Naive thymus-derived CD4-positive, alpha-beta T cell (primary cell): ENCODE measurements at regions of chr17 and their contacts with region 1.

Region 1: GRCh38 chr17:50865984-50866774 is at the start of gene TOB1:
- DNase-seq: peak; percentile 92 to 98 (median 95)
- ATAC-seq: peak; percentile 86
- H3K4me3 ChIP-seq: peak within 1 kb of the TSS; percentile 89
- H3K4me3 Mint-ChIP-seq: peak within 1 kb of the TSS; percentile 96 to 100 (median 100)
- H3K27ac ChIP-seq: peak within 1 kb of the TSS; percentile 98
- H3K27ac Mint-ChIP-seq: peak within 1 kb of the TSS; percentile 98 to 100 (median 100)
- H3K4me1 ChIP-seq: peaks cover 41 to 50% of the 10 kb centered on the region in 2 donors
- H3K4me1 Mint-ChIP-seq: peaks cover 31 to 65% (median 57%) of the 10 kb centered on the region in 7 donors
- H3K27me3 ChIP-seq: no peaks in the 10 kb centered on the region
- H3K27me3 Mint-ChIP-seq: peaks cover 0 to 2% (median 0%) of the 10 kb centered on the region in 5 donors
- total RNA-seq, gene TOB1: 51.5 to 261 (median 131) TPM

Region 2: GRCh38 chr17:49361902-49362722 is 1504.1 kb before region 1 on chr17 and contains the start of gene ZNF652:
- CTCF ChIA-PET with region 1: no interaction called
- POLR2A ChIA-PET with region 1: no interaction called
- intact Hi-C with region 1: loop called in 1 of 2 experiments (anchors 5 kb)
- DNase-seq: peak; percentile 86 to 98 (median 97)
- ATAC-seq: peak; percentile 81
- H3K4me3 ChIP-seq: peak within 1 kb of the TSS; percentile 67
- H3K4me3 Mint-ChIP-seq: peak within 1 kb of the TSS; percentile 88 to 99 (median 96)
- H3K27ac ChIP-seq: peak within 1 kb of the TSS; percentile 71
- H3K27ac Mint-ChIP-seq: peak within 1 kb of the TSS; percentile 92 to 97 (median 97)
- H3K4me1 ChIP-seq: peaks cover 26 to 33% of the 10 kb centered on the region in 2 donors
- H3K4me1 Mint-ChIP-seq: peaks cover 48 to 58% (median 53%) of the 10 kb centered on the region in 7 donors
- H3K27me3 ChIP-seq: no peaks in the 10 kb centered on the region
- H3K27me3 Mint-ChIP-seq: no peaks in the 10 kb centered on the region
- total RNA-seq, gene ZNF652: 33.8 to 64.4 (median 49.9) TPM

Region 3: GRCh38 chr17:50707289-50708049 is 158.7 kb before region 1 on chr17 and contains the start of gene ANKRD40:
- CTCF ChIA-PET with region 1: no interaction called
- POLR2A ChIA-PET with region 1: interaction called, 8 read pairs
- intact Hi-C with region 1: loop called (anchors 5 kb)
- DNase-seq: peak; percentile 87 to 95 (median 91)
- ATAC-seq: peak; percentile 94
- H3K4me3 ChIP-seq: peak within 1 kb of the TSS; percentile 79
- H3K4me3 Mint-ChIP-seq: peak within 1 kb of the TSS; percentile 88 to 97 (median 93)
- H3K27ac ChIP-seq: peak within 1 kb of the TSS; percentile 88
- H3K27ac Mint-ChIP-seq: peak within 1 kb of the TSS; percentile 93 to 99 (median 97)
- H3K4me1 ChIP-seq: peaks cover 13 to 20% of the 10 kb centered on the region in 2 donors
- H3K4me1 Mint-ChIP-seq: peaks cover 23 to 68% (median 47%) of the 10 kb centered on the region in 7 donors
- H3K27me3 ChIP-seq: no peaks in the 10 kb centered on the region
- H3K27me3 Mint-ChIP-seq: peaks cover 0 to 2% (median 0%) of the 10 kb centered on the region in 5 donors
- total RNA-seq, gene ANKRD40: 27.4 to 37.2 (median 33.4) TPM

Region 4: GRCh38 chr17:50904521-50905459 is 38.6 kb after region 1 on chr17:
- CTCF ChIA-PET with region 1: interaction called, 10 read pairs
- POLR2A ChIA-PET with region 1: interaction called, 828 read pairs
- intact Hi-C with region 1: no loop called
- DNase-seq: no peak
- ATAC-seq: no peak
- H3K4me3 ChIP-seq: no peak overlapping the region
- H3K4me3 Mint-ChIP-seq: no peak overlapping the region
- H3K27ac ChIP-seq: no peak overlapping the region
- H3K27ac Mint-ChIP-seq: no peak overlapping the region
- H3K4me1 ChIP-seq: peaks cover 31 to 47% of the 10 kb centered on the region in 2 donors
- H3K4me1 Mint-ChIP-seq: peaks cover 40 to 68% (median 64%) of the 10 kb centered on the region in 7 donors
- H3K27me3 ChIP-seq: no peaks in the 10 kb centered on the region
- H3K27me3 Mint-ChIP-seq: peaks cover 0 to 2% (median 0%) of the 10 kb centered on the region in 5 donors

Region 5: DNA sequence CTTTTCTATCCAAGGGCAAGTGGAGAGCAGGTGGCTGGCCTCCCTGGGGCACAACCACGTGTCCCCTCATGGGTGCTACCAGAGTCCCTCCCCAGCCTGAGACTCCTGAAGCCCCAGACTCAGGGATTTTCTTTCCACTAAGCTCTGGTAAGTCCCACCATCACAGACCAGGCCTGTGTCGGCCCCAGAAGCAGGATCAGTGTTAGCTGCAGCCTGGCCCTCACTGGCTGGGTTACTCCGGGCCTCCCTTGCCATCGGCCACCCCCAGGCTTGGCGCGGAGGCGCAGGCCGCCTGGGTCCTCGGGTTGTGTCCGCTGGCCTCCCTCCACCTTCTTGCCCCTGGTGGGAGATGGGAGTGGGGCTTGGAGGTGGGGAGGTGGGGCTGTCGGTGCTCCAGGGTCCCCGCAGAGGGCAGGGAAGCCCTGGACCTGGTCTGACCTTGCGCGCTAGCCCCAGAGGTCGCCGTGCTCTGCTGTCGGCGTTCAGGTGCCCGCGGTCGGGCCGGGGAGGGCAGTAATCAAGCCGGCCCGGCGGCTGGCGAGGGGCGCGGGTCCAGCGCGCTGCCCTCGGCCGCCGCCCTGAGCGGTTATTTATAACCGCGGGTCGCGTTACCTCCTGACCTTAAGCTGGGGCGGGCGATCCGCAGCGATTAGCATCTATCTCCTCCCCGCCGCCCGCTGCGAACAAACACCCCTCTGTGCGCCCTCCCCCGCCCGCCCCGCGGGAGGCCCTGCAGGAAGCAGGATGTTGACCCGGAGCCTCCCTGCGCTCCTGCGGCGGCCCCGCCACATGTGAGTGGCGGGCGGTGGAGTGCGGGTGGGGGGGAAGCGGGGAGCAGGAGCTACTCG is 78.1 kb after region 1 on chr17:
- CTCF ChIA-PET with region 1: interaction called, 33 read pairs
- POLR2A ChIA-PET with region 1: interaction called, 664 read pairs
- intact Hi-C with region 1: loop called (anchors 1 kb)
- DNase-seq: peak; percentile 56 to 79 (median 73)
- ATAC-seq: peak; percentile 91
- H3K4me3 ChIP-seq: peak overlapping the region; percentile 73
- H3K4me3 Mint-ChIP-seq: peak overlapping the region; percentile 73 to 90 (median 85)
- H3K27ac ChIP-seq: peak overlapping the region; percentile 88
- H3K27ac Mint-ChIP-seq: peak overlapping the region; percentile 78 to 95 (median 94)
- H3K4me1 ChIP-seq: peaks cover 17 to 33% of the 10 kb centered on the region in 2 donors
- H3K4me1 Mint-ChIP-seq: peaks cover 25 to 61% (median 35%) of the 10 kb centered on the region in 7 donors
- H3K27me3 ChIP-seq: no peaks in the 10 kb centered on the region
- H3K27me3 Mint-ChIP-seq: no peaks in the 10 kb centered on the region

Region 6: DNA sequence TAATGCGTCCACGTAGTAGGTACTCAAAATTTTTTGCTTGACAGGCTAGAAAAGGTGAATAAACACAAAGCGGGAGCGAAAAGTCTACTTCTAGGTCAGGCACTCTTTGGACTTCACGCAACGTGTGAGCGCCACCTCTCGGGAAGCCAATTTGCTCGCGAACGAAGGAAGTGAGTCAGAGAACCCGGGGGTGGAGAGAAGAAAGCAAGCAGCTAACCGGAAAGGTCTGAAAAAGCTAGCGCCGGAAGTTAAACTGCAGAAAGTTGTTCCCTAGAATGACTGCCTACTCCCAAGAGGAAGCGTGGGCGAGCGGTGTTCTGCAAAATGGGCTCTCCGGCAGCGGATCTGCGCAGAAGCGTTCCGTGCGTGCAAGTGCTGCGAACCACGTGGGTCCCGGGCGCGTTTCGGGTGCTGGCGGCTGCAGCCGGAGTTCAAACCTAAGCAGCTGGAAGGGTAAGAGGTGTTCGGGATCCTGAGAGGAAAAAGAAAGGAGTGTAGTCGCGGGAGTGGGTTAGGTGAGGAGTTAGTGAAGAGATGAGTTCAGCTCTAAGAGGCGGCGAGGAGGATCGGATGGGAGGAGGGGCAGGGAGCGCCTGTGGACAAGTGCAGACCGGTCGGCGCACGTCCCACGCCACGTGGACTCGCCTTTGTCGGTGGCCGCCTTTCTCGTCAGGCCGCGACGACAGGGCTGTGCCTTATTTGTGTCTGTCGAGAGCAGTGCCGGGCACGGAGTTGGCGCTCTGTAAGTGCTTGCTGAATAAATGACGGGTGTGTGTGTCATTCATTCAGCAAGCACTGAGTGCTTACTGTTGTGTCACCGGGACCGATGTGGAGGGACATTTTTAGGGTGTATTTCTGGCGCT is 287.3 kb after region 1 on chr17 and contains the start of gene NME1:
- CTCF ChIA-PET with region 1: interaction called, 4 read pairs
- POLR2A ChIA-PET with region 1: interaction called, 8 read pairs
- intact Hi-C with region 1: loop called (anchors 1 kb)
- DNase-seq: peak; percentile 94 to 99 (median 98)
- ATAC-seq: peak; percentile 97
- H3K4me3 ChIP-seq: peak within 1 kb of the TSS; percentile 78
- H3K4me3 Mint-ChIP-seq: no peak within 1 kb of the TSS
- H3K27ac ChIP-seq: peak within 1 kb of the TSS; percentile 75
- H3K27ac Mint-ChIP-seq: no peak within 1 kb of the TSS
- H3K4me1 ChIP-seq: peaks cover 15% of the 10 kb centered on the region in 2 donors
- H3K4me1 Mint-ChIP-seq: peaks cover 0 to 15% (median 6%) of the 10 kb centered on the region in 7 donors
- H3K27me3 ChIP-seq: no peaks in the 10 kb centered on the region
- H3K27me3 Mint-ChIP-seq: no peaks in the 10 kb centered on the region
- total RNA-seq, gene NME1: 13.4 to 159 (median 20.1) TPM